ENCODE measurements at regions of chr14 and their contacts with region 1.

Region 1: DNA sequence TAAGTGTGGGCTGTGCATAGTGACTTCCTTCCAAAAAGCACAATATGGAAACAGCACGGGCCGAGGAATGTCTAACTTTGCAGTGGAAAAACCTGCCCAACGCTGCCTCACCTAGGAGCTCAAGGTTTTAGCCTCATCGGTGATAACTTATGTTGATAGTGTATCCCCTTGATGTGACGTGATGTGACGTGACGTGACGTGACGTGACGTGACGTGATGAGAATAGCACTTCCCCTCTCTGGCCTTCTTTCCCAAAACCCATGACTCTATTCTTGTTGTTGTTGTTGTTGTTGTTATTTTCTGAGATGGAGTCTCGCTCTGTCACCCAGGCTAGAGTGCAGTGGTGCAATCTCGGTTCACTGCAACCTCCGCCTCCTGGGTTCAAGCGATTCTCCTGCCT is 64.5 kb downstream of the KCNK13 start:
- DNase-seq: no peak
- ATAC-seq: no peak
- H3K4me3 ChIP-seq: no peak overlapping the region
- H3K27ac ChIP-seq: no peak overlapping the region
- H3K4me1 ChIP-seq: no peaks in the 10 kb centered on the region
- CTCF ChIP-seq: no peak
- EP300 ChIP-seq: no peak
- POLR2A ChIP-seq: no peak
- RAD21 ChIP-seq: no peak

Region 2: DNA sequence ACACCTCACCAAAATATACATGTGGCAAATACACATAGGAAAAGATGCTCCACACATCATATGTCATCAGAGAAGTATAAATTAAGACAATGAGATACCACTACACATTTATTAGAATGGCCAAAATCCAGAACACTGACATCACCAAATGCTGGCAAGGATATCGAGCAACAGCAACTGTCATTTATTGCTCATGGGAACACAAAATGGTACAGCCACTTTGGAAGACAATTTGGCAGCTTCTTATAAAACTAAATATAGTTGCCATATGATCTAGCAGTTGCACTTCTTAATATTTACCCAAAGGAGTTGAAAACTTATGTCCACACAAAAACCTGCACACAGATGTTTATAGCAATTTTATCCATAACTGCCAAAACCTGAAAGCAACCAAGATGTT is 71.5 kb before region 1 on chr14:
- CTCF ChIA-PET with region 1: no interaction called
- POLR2A ChIA-PET with region 1: no interaction called
- DNase-seq: no peak
- ATAC-seq: no peak
- H3K4me3 ChIP-seq: no peak overlapping the region
- H3K27ac ChIP-seq: no peak overlapping the region
- H3K4me1 ChIP-seq: 0 out of 3 replicates have a peak, but pooled peaks cover 5% of the 10 kb centered on the region
- CTCF ChIP-seq: no peak
- EP300 ChIP-seq: no peak
- POLR2A ChIP-seq: no peak
- RAD21 ChIP-seq: no peak

Region 3: GRCh38 chr14:90114550-90114949 is 11.7 kb before region 1 on chr14:
- CTCF ChIA-PET with region 1: interaction called, 13 read pairs
- POLR2A ChIA-PET with region 1: no interaction called
- DNase-seq: peak; percentile 11 to 26
- ATAC-seq: peak in 1 of 2 experiments; percentile 72; a peak in 3 of 6 replicates
- H3K4me3 ChIP-seq: no peak overlapping the region
- H3K27ac ChIP-seq: no peak overlapping the region
- H3K4me1 ChIP-seq: peaks cover 5% of the 10 kb centered on the region; the same call in 1 of the 3 replicates
- CTCF ChIP-seq: no peak
- EP300 ChIP-seq: no peak
- POLR2A ChIP-seq: no peak
- RAD21 ChIP-seq: peak in 1 of 2 experiments; percentile 13; a peak in 1 of 5 replicates